ENCODE measurements at regions of chr7 and their contacts with region 1.

Region 1: GRCh38 chr7:74206589-74207120 is 3.2 kb upstream of the LAT2 start:
- DNase-seq: peak; percentile 74 to 99 (median 90)
- ATAC-seq: peak; percentile 91 to 95 (median 92)
- H3K4me3 ChIP-seq: no peak overlapping the region
- H3K27ac ChIP-seq: no peak overlapping the region
- H3K4me1 ChIP-seq: no peaks in the 10 kb centered on the region
- H3K27me3 ChIP-seq: no peaks in the 10 kb centered on the region
- CTCF ChIP-seq: peak; percentile 85 to 97 (median 96)

Region 2: GRCh38 chr7:73865738-73866445 is 340.8 kb before region 1 on chr7:
- intact Hi-C with region 1: loop called in 1 of 3 experiments (anchors 10 kb)
- DNase-seq: peak in 1 of 6 donors; percentile 53
- ATAC-seq: peak in 3 of 4 donors; percentile 80 to 89 (median 87)
- H3K4me3 ChIP-seq: no peak overlapping the region
- H3K27ac ChIP-seq: no peak overlapping the region
- H3K4me1 ChIP-seq: no peaks in the 10 kb centered on the region
- H3K27me3 ChIP-seq: no peaks in the 10 kb centered on the region
- CTCF ChIP-seq: peak; percentile 7 to 47 (median 32)

Region 3: GRCh38 chr7:74068393-74069085 is 138.1 kb before region 1 on chr7:
- intact Hi-C with region 1: loop called in 1 of 3 experiments (anchors 5 kb)
- DNase-seq: peak in 1 of 6 donors; percentile 78
- ATAC-seq: no peak
- H3K4me3 ChIP-seq: no peak overlapping the region
- H3K27ac ChIP-seq: no peak overlapping the region
- H3K4me1 ChIP-seq: no peaks in the 10 kb centered on the region
- H3K27me3 ChIP-seq: no peaks in the 10 kb centered on the region
- CTCF ChIP-seq: no peak

Region 4: GRCh38 chr7:74343281-74344127 is 136.8 kb after region 1 on chr7:
- intact Hi-C with region 1: no loop called
- DNase-seq: no peak
- ATAC-seq: peak in 3 of 4 donors; percentile 30 to 63 (median 44)
- H3K4me3 ChIP-seq: no peak overlapping the region
- H3K27ac ChIP-seq: no peak overlapping the region
- H3K4me1 ChIP-seq: no peaks in the 10 kb centered on the region
- H3K27me3 ChIP-seq: no peaks in the 10 kb centered on the region
- CTCF ChIP-seq: no peak